ENCODE measurements at regions of chr16 and their contacts with region 1.

Region 1: DNA sequence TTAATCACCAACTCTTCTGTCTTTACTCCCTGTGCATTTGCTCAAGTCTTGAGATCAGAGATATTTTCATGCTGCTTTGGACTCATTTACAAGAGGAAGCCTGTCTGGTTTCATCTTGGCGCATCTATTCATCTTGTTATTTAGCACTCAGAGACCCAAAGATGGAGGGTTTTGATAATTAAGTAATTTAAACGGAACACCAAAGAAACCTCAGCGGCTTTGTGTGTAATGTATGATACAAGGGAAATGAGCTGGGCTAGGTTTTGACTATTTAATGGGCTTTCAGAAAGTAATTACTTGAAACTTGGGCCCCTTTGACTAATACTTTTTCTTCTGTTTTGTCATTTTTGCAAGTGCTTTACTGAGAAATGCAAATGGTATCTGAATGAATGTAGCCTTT is 66.2 kb upstream of the CACNG3 start:
- DNase-seq: peak; percentile 22
- ATAC-seq: peak; percentile 77
- H3K4me3 Mint-ChIP-seq: no peak overlapping the region
- H3K27ac Mint-ChIP-seq: peak overlapping the region; percentile 85
- H3K4me1 Mint-ChIP-seq: peaks cover 37% of the 10 kb centered on the region
- H3K27me3 Mint-ChIP-seq: no peaks in the 10 kb centered on the region

Region 2: GRCh38 chr16:23842137-23842600 is 347.8 kb before region 1 on chr16:
- CTCF ChIA-PET with region 1: interaction called, 3 read pairs
- POLR2A ChIA-PET with region 1: no interaction called
- intact Hi-C with region 1: loop called in 1 of 2 experiments (anchors 1 kb)
- DNase-seq: peak; percentile 67
- ATAC-seq: peak; percentile 91
- H3K4me3 Mint-ChIP-seq: no peak overlapping the region
- H3K27ac Mint-ChIP-seq: peak overlapping the region; percentile 85
- H3K4me1 Mint-ChIP-seq: peaks cover 83% of the 10 kb centered on the region
- H3K27me3 Mint-ChIP-seq: no peaks in the 10 kb centered on the region

Region 3: DNA sequence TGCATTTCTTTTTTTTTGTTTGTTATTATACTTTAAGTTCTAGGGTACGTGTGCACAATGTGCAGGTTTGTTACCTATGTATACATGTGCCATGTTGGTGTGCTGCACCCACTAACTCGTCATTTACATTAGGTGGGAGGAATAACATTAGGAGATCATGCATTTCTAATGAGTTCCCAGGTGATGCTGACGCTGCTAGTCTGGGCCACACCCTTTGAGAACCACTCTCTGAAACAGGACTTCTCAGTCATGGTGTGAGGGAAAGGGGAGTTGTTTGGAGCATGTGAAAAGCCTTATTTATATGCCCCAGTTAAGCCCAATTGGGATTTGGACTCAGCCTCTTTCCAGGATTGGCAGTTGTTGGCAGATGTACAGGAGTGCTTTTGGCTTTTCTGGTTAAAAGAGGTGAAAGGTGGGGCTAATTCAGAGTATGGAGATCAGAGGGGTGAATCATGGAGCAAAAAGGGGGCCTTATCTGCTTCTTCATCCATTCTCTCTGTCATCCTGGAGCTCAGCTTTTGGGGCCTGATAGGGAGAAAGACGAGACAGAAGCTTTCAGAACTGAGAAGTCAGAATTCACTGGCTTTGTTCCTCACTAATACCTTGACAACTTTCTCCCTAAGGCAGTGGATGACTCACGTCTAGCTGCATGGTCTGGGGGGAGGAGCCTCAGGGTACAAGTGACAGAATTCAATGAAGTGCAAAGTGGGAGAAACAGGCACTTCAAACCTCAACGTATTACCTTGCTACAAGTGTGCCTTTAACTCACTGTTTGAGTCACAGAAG is 113.8 kb before region 1 on chr16:
- CTCF ChIA-PET with region 1: no interaction called
- POLR2A ChIA-PET with region 1: no interaction called
- intact Hi-C with region 1: loop called in 1 of 2 experiments (anchors 1 kb)
- DNase-seq: peak; percentile 51
- ATAC-seq: peak; percentile 92
- H3K4me3 Mint-ChIP-seq: no peak overlapping the region
- H3K27ac Mint-ChIP-seq: no peak overlapping the region
- H3K4me1 Mint-ChIP-seq: peaks cover 33% of the 10 kb centered on the region
- H3K27me3 Mint-ChIP-seq: no peaks in the 10 kb centered on the region

Region 4: DNA sequence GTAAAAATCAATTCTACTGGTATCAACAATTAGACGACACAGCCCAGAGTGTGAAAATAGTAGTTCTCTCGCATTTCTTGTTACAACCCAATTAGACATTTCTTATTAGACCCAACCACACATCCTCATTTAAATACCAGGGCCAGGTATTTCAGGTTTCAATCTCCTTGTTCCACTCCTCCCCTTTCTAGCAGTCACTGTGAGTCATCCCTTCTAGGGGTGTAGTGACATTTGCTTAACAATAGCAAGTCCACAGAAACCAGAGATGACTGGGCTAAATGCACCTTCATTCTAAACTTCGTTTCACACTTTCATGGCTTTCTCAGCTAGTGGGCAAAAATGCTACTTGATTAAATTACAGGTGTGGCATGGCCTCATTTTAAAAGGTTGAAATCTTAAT is 50.7 kb before region 1 on chr16:
- CTCF ChIA-PET with region 1: no interaction called
- POLR2A ChIA-PET with region 1: no interaction called
- intact Hi-C with region 1: loop called in 1 of 2 experiments (anchors 1 kb)
- DNase-seq: peak; percentile 27
- ATAC-seq: peak; percentile 99
- H3K4me3 Mint-ChIP-seq: no peak overlapping the region
- H3K27ac Mint-ChIP-seq: peak overlapping the region; percentile 24
- H3K4me1 Mint-ChIP-seq: peaks cover 24% of the 10 kb centered on the region
- H3K27me3 Mint-ChIP-seq: no peaks in the 10 kb centered on the region

Region 5: DNA sequence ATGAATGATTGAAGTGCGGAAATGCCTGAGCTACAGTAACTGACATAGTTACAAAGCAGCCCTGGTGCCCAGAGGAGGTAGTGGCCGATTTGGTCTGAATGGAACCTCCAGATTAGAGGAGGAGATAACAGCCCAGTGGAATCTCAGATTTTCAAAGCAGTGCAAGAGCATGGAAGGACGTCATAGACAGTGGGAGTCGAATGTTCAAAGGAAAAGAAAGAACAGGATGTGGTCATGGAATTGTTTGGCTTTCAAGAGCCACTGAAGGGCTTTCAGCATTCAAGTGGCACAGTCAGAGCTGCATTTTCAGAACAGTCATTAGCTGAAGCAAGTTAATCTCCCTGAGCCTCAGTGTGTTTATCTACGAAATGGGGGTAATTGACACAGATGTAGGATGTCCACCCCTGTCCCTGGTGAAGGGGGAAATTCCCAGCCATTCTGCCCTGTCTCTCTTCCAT is 38.4 kb before region 1 on chr16:
- CTCF ChIA-PET with region 1: no interaction called
- POLR2A ChIA-PET with region 1: no interaction called
- intact Hi-C with region 1: loop called in 1 of 2 experiments (anchors 1 kb)
- DNase-seq: peak; percentile 42
- ATAC-seq: peak; percentile 82
- H3K4me3 Mint-ChIP-seq: no peak overlapping the region
- H3K27ac Mint-ChIP-seq: peak overlapping the region; percentile 87
- H3K4me1 Mint-ChIP-seq: peaks cover 48% of the 10 kb centered on the region
- H3K27me3 Mint-ChIP-seq: no peaks in the 10 kb centered on the region

Region 6: DNA sequence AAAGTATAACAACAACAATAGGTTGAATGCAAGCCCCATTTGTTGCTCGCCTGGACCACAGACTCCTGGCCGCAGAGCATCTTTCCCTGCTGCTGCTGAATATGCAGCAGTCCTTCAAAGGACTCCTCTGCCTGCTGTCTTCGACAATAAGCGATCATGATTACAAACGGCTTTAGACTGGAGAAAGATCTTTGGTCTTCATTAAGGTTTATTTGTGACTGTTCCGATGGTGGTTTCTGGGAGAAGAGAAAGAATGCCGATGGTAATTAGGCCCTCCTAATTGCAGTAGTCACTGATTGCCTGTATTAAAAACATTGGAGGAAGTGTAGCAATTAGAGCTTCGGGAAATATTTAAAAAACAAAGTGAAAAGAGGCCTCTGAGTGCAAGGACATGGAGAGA is 204.4 kb after region 1 on chr16:
- CTCF ChIA-PET with region 1: no interaction called
- POLR2A ChIA-PET with region 1: interaction called, 10 read pairs
- intact Hi-C with region 1: no loop called
- DNase-seq: no peak
- ATAC-seq: no peak
- H3K4me3 Mint-ChIP-seq: no peak overlapping the region
- H3K27ac Mint-ChIP-seq: no peak overlapping the region
- H3K4me1 Mint-ChIP-seq: no peaks in the 10 kb centered on the region
- H3K27me3 Mint-ChIP-seq: peaks cover 21% of the 10 kb centered on the region